PC-9 (cell line): ENCODE measurements at regions of chr6 and their contacts with region 1.

Region 1: GRCh38 chr6:17688481-17688880 is 18.2 kb downstream of the NUP153 start:
- DNase-seq: no peak
- H3K4me3 ChIP-seq: no peak overlapping the region
- H3K27ac ChIP-seq: no peak overlapping the region
- H3K4me1 ChIP-seq: no peaks in the 10 kb centered on the region
- H3K27me3 ChIP-seq: no peaks in the 10 kb centered on the region
- CTCF ChIP-seq: no peak

Region 2: GRCh38 chr6:17719323-17720041 is 31.0 kb after region 1 on chr6:
- CTCF ChIA-PET with region 1: interaction called, 21 read pairs
- POLR2A ChIA-PET with region 1: interaction called, 5 read pairs
- intact Hi-C with region 1: no loop called
- DNase-seq: no peak
- H3K4me3 ChIP-seq: no peak overlapping the region
- H3K27ac ChIP-seq: no peak overlapping the region
- H3K4me1 ChIP-seq: peaks cover 37% of the 10 kb centered on the region
- H3K27me3 ChIP-seq: no peaks in the 10 kb centered on the region
- CTCF ChIP-seq: no peak